GM12878 (cell line): ENCODE measurements at regions of chrX and their contacts with region 1.

Region 1: GRCh38 chrX:41116948-41117347 is 31.7 kb downstream of the USP9X start:
- DNase-seq: peak; percentile 71
- ATAC-seq: peak; percentile 78
- H3K4me3 ChIP-seq: 0 out of 2 replicates have a peak overlapping the region, but pooled peaks have one; percentile 26
- H3K27ac ChIP-seq: peak overlapping the region; percentile 65; the same call in 1 of the 2 replicates
- H3K4me1 ChIP-seq: peaks cover 40% of the 10 kb centered on the region
- H3K27me3 ChIP-seq: no peaks in the 10 kb centered on the region
- CTCF ChIP-seq: no peak
- EP300 ChIP-seq: peak in 1 of 2 experiments; percentile 57; a peak in 1 of 4 replicates
- POLR2A ChIP-seq: no peak
- RAD21 ChIP-seq: no peak

Region 2: DNA sequence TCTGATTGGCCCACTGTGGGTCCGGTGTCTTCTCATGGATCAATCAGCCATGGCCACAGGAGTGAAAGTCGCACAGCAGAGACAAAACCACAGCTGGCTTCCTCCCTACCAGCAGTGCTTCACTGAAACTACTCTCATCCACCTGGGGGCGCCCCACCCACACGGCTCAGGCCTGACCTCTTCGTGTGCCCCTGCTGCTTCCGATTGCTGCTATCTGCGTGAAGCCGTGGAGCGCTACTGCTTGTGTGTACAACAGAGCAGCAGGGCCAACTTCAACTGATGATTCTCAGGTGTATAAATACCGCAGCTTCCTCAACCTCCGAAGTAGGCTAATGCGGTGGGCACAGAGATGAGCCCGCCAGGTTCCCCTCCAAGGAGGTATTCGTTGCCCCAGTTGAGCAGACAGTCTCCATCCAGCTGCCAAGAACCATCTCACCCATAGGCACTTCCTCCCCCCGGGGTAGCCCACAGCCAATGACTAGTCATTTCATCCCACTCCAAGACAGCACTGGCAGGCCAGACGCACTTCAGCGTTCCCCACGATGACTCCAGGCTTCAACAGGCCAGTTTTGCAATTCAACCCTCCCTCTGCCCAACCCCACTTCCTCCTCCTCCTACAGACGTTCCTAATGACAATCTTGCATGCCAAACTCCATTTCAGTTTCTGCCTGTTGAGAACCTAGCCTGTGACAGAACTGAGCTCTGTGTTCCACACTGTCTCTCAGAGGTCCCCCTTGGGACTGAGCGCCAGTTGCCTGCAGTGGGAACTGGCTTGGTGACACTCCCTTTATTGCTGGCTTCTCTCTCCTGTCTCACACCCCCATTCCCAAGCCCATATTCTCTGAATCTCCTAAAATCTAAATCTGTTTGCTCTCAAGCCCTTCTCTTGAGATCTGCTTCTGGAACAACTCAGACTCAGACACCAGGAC is 577.5 kb before region 1 on chrX:
- CTCF ChIA-PET with region 1: interaction called, 17 read pairs
- POLR2A ChIA-PET with region 1: no interaction called
- RAD21 ChIA-PET with region 1: interaction called, 11 read pairs
- SMC1A ChIA-PET with region 1: interaction called, 6 read pairs
- in situ Hi-C with region 1: no loop called
- intact Hi-C with region 1: loop called (anchors 10 kb)
- DNase-seq: peak; percentile 56
- ATAC-seq: peak; percentile 90
- H3K4me3 ChIP-seq: no peak overlapping the region
- H3K27ac ChIP-seq: peak overlapping the region; percentile 59
- H3K4me1 ChIP-seq: peaks cover 11% of the 10 kb centered on the region
- H3K27me3 ChIP-seq: peaks cover 0 to 2% of the 10 kb centered on the region in 2 experiments; a peak in 2 of 4 replicates
- CTCF ChIP-seq: peak; percentile 30 to 51 (median 48); a peak in 5 of 6 replicates
- EP300 ChIP-seq: no peak
- POLR2A ChIP-seq: no peak
- RAD21 ChIP-seq: 0 out of 2 replicates have a peak, but pooled peaks have one; percentile 26

Region 3: DNA sequence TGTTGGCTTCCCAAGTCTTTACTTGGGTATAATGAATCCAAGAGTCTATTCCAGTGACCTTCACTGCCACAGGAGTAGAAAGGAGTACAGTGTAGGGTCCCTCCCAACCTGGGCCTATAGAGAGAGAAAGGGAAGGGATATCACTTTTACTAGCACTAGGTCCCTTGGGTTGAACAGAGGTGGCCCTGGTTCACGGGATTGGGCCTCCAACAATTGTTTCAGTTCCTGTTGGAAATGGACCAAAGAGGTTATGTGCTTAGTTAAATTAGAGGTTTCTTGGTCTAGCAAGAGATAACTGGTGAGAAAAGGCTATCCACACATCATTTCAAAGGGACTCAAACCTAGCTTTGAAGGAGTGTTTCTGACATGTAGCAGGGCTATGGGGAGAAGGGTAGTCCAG is 324.5 kb before region 1 on chrX:
- CTCF ChIA-PET with region 1: interaction called, 41 read pairs
- POLR2A ChIA-PET with region 1: no interaction called
- RAD21 ChIA-PET with region 1: interaction called, 19 read pairs
- SMC1A ChIA-PET with region 1: interaction called, 43 read pairs
- in situ Hi-C with region 1: no loop called
- intact Hi-C with region 1: loop called (anchors 5 kb)
- DNase-seq: no peak
- ATAC-seq: peak; percentile 22; the same call in 2 of the 3 replicates
- H3K4me3 ChIP-seq: no peak overlapping the region
- H3K27ac ChIP-seq: no peak overlapping the region
- H3K4me1 ChIP-seq: no peaks in the 10 kb centered on the region
- H3K27me3 ChIP-seq: no peaks in the 10 kb centered on the region
- CTCF ChIP-seq: no peak
- EP300 ChIP-seq: no peak
- POLR2A ChIP-seq: no peak
- RAD21 ChIP-seq: no peak

Region 4: GRCh38 chrX:40877887-40878286 is 239.1 kb before region 1 on chrX:
- CTCF ChIA-PET with region 1: interaction called, 105 read pairs
- POLR2A ChIA-PET with region 1: no interaction called
- RAD21 ChIA-PET with region 1: interaction called, 67 read pairs
- SMC1A ChIA-PET with region 1: interaction called, 109 read pairs
- in situ Hi-C with region 1: no loop called
- intact Hi-C with region 1: no loop called
- DNase-seq: no peak
- ATAC-seq: peak; percentile 67
- H3K4me3 ChIP-seq: no peak overlapping the region
- H3K27ac ChIP-seq: no peak overlapping the region
- H3K4me1 ChIP-seq: no peaks in the 10 kb centered on the region
- H3K27me3 ChIP-seq: no peaks in the 10 kb centered on the region
- CTCF ChIP-seq: peak; percentile 24 to 44 (median 29); a peak in 4 of 6 replicates
- EP300 ChIP-seq: no peak
- POLR2A ChIP-seq: no peak
- RAD21 ChIP-seq: peak; percentile 37; the same call in 1 of the 2 replicates

Region 5: DNA sequence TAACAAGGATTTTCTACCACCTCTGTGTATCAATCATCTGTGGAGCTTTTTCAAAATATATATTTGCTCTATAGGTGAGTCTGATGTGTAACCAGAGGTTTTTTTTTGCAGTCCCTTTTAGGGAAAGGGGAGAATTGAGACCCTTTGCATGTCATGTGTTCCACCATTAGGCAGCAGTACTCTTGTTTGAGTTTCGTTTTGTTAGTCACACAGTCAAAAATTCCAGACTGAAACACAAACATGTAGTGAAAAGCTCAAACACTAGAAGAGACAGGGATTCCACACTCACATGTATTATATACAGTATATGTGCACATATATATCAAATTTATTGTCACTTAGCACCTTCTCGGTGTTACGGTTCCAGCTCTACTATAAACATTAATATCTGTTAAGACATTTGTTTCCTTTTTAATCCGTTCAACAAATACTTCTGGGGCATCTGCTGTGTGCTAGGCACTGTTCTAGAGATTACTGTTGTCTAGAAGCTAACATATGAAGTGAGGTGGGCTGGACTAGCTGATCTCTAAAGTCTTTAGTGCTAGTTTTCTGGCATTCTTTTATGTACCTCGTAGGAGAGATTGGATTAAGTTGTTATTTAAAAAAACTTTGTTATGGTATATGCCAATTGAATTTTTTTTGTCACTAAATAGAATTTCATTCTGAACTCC is 26.2 kb before region 1 on chrX:
- CTCF ChIA-PET with region 1: interaction called, 29 read pairs
- POLR2A ChIA-PET with region 1: interaction called, 16 read pairs
- RAD21 ChIA-PET with region 1: interaction called, 78 read pairs
- SMC1A ChIA-PET with region 1: interaction called, 52 read pairs
- in situ Hi-C with region 1: no loop called
- intact Hi-C with region 1: loop called (anchors 2 kb)
- DNase-seq: no peak
- ATAC-seq: no peak
- H3K4me3 ChIP-seq: peak overlapping the region; percentile 35
- H3K27ac ChIP-seq: peak overlapping the region; percentile 1; the same call in 1 of the 2 replicates
- H3K4me1 ChIP-seq: peaks cover 3% of the 10 kb centered on the region; the same call in 1 of the 2 replicates
- H3K27me3 ChIP-seq: no peaks in the 10 kb centered on the region
- CTCF ChIP-seq: no peak
- EP300 ChIP-seq: no peak
- POLR2A ChIP-seq: no peak
- RAD21 ChIP-seq: no peak

Region 6: DNA sequence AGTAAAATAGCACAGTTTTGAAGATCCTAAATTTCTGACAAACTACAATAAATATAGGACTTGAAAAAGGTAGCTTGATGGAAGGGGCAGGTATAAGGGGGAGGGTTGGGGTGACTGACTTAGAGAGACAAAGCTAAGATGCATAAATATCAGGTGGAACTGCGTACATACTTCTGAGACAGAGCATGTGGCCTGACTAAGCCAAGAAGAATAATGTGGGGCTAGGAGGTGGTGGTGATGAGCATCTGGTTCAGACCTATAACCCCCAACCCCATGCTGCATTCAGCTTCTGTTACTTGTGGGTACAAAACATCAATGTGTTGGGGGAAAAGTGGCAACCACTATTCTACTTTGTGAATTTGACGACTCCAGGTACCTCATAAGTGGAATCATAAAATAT is 11.9 kb before region 1 on chrX:
- CTCF ChIA-PET with region 1: interaction called, 17 read pairs
- POLR2A ChIA-PET with region 1: interaction called, 5 read pairs
- RAD21 ChIA-PET with region 1: interaction called, 6 read pairs
- SMC1A ChIA-PET with region 1: interaction called, 3 read pairs
- in situ Hi-C with region 1: no loop called
- intact Hi-C with region 1: no loop called
- DNase-seq: no peak
- ATAC-seq: no peak; the same call in 1 of the 3 replicates
- H3K4me3 ChIP-seq: no peak overlapping the region
- H3K27ac ChIP-seq: no peak overlapping the region
- H3K4me1 ChIP-seq: no peaks in the 10 kb centered on the region
- H3K27me3 ChIP-seq: no peaks in the 10 kb centered on the region
- CTCF ChIP-seq: no peak
- EP300 ChIP-seq: no peak
- POLR2A ChIP-seq: no peak
- RAD21 ChIP-seq: no peak